Mammary epithelial cell (primary cell): ENCODE measurements at regions of chr2 and their contacts with region 1.

Region 1: DNA sequence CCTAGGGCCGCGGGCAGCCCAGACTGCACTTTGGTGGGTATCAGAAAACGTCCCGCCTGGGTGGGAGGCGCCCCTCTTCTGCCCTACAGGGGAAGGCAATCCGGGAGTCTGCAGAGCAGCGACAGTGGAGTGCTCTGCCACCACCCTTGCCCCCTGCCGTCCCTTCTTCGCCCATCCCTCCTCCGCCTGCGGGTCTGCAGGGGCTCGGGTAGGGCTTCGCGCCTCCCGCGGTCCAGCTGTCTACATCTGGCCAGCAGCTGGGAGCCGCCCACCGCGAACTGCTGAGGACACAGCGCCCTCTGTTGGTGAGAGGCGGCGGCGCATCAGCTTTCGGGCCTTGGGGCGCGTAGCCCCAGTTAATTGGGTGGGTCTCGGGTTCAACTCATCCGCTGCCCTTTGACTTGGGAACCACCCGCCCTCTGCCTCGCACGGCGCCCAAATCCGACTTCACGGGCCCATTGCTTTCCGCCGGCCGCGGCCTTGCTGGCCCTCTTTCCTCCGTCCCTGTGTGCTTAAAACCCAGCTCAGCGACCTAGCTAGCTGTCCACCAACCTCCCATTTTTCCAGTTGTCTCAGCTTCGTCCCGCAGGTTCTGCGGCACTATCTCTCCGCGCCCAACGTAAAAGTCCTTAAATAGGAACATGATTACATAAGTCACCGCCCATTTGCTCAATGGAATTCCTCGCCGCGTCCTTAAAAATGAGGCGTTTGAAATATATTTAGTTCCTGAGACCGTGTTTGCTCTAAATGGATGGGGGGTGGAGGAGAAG is 17.6 kb downstream of the WNT10A start:
- DNase-seq: peak; percentile 36
- H3K4me3 ChIP-seq: no peak overlapping the region
- H3K27ac ChIP-seq: no peak overlapping the region
- H3K4me1 ChIP-seq: peaks cover 49% of the 10 kb centered on the region
- H3K27me3 ChIP-seq: no peaks in the 10 kb centered on the region
- CTCF ChIP-seq: peak; percentile 64 to 97

Region 2: GRCh38 chr2:218883491-218884490 is 14.5 kb before region 1 on chr2:
- CTCF ChIA-PET with region 1: interaction called, 3 read pairs
- dilution Hi-C with region 1: no loop called
- in situ Hi-C with region 1: no loop called
- intact Hi-C with region 1: loop called (anchors 1 kb)
- DNase-seq: peak; percentile 52
- H3K4me3 ChIP-seq: peak overlapping the region; percentile 18 to 33 (median 31)
- H3K27ac ChIP-seq: no peak overlapping the region
- H3K4me1 ChIP-seq: peaks cover 36% of the 10 kb centered on the region
- H3K27me3 ChIP-seq: no peaks in the 10 kb centered on the region
- CTCF ChIP-seq: no peak

Region 3: GRCh38 chr2:218953481-218953881 is 55.2 kb after region 1 on chr2:
- CTCF ChIA-PET with region 1: no interaction called
- dilution Hi-C with region 1: no loop called
- in situ Hi-C with region 1: no loop called
- intact Hi-C with region 1: no loop called
- DNase-seq: no peak
- H3K4me3 ChIP-seq: no peak overlapping the region
- H3K27ac ChIP-seq: no peak overlapping the region
- H3K4me1 ChIP-seq: no peaks in the 10 kb centered on the region
- H3K27me3 ChIP-seq: peaks cover 3% of the 10 kb centered on the region
- CTCF ChIP-seq: peak in 1 of 2 donors; percentile 17